ENCODE measurements at regions of chr10 and their contacts with region 1.

Region 1: GRCh38 chr10:102713814-102714620 is at the start of gene ARL3:
- DNase-seq: peak; percentile 75 to 95 (median 89)
- ATAC-seq: peak; percentile 96
- H3K4me3 ChIP-seq: peak within 1 kb of the TSS; percentile 98
- H3K4me3 Mint-ChIP-seq: peak within 1 kb of the TSS; percentile 86 to 98 (median 94)
- H3K27ac ChIP-seq: peak within 1 kb of the TSS; percentile 92
- H3K27ac Mint-ChIP-seq: peak within 1 kb of the TSS; percentile 66 to 95 (median 90)
- H3K4me1 ChIP-seq: peaks cover 4 to 18% of the 10 kb centered on the region in 2 donors
- H3K4me1 Mint-ChIP-seq: peaks cover 26 to 52% (median 43%) of the 10 kb centered on the region in 7 donors
- H3K27me3 ChIP-seq: no peaks in the 10 kb centered on the region
- H3K27me3 Mint-ChIP-seq: no peaks in the 10 kb centered on the region
- total RNA-seq, gene ARL3: 1.3 to 5.1 (median 2.9) TPM

Region 2: DNA sequence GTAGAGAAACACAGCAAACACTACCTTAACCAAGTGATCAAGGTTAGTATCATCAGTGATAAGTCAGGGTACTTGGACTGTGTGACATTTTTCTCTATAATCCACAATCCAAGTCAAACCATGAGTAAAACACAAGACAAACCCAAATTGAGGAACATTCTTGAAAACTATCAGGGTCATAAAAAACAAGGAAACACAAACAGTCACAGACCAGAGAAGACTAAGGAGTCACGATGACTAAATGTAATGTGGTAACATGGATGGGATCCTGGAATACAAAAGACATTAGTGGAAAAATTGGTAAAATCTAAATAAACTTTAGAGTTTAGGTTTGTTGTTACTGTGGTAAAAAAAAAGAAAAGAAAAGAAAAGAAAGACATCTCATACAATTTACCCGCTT is 761.8 kb before region 1 on chr10:
- CTCF ChIA-PET with region 1: no interaction called
- POLR2A ChIA-PET with region 1: no interaction called
- intact Hi-C with region 1: no loop called
- DNase-seq: no peak
- ATAC-seq: no peak
- H3K4me3 ChIP-seq: no peak overlapping the region
- H3K4me3 Mint-ChIP-seq: no peak overlapping the region
- H3K27ac ChIP-seq: no peak overlapping the region
- H3K27ac Mint-ChIP-seq: no peak overlapping the region
- H3K4me1 ChIP-seq: no peaks in the 10 kb centered on the region
- H3K4me1 Mint-ChIP-seq: peaks cover 0 to 8% (median 0%) of the 10 kb centered on the region in 7 donors
- H3K27me3 ChIP-seq: no peaks in the 10 kb centered on the region
- H3K27me3 Mint-ChIP-seq: no peaks in the 10 kb centered on the region

Region 3: DNA sequence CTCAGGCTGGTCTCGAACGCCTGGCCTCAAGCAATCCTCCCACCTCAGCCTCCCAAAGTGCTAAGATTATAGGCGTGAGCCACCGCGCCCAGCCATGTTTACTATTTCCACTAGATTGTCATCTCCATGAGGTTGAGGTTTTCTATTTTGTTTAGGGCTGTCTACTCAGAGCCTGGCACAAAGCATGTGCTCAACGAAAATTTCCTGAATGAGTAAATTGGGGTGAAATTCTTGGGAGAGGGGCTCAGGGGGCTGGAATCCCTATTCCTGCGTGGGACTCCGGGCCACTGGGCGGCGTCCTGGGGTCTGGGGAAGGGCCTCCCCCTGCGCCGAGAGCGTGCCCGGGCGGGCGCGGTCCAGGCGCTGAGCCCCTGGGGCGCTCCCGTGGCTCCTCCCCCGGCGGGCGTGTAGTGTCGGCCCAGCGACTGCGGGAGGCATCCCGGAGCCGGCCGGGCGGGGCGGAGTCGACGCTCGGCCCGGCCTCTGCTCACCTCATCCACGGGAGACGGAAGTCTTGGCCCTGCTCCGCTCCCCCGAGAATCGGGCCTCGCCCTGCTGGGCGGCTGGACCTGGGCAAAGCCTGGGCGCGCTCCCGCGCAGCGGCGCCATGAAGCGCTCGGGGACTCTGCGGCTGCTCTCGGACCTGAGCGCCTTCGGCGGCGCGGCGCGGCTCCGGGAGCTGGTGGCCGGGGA is 649.0 kb before region 1 on chr10 and contains the start of gene HPS6:
- CTCF ChIA-PET with region 1: no interaction called
- POLR2A ChIA-PET with region 1: no interaction called
- intact Hi-C with region 1: loop called in 1 of 2 experiments (anchors 10 kb)
- DNase-seq: peak; percentile 73 to 94 (median 81)
- ATAC-seq: peak; percentile 98
- H3K4me3 ChIP-seq: peak within 1 kb of the TSS; percentile 82
- H3K4me3 Mint-ChIP-seq: peak within 1 kb of the TSS; percentile 79 to 91 (median 89)
- H3K27ac ChIP-seq: peak within 1 kb of the TSS; percentile 93
- H3K27ac Mint-ChIP-seq: peak within 1 kb of the TSS; percentile 85 to 97 (median 93)
- H3K4me1 ChIP-seq: peaks cover 14 to 23% of the 10 kb centered on the region in 2 donors
- H3K4me1 Mint-ChIP-seq: peaks cover 23 to 43% (median 36%) of the 10 kb centered on the region in 7 donors
- H3K27me3 ChIP-seq: no peaks in the 10 kb centered on the region
- H3K27me3 Mint-ChIP-seq: no peaks in the 10 kb centered on the region
- total RNA-seq, gene HPS6: 12.1 to 24.2 (median 20.9) TPM

Region 4: GRCh38 chr10:102660888-102661657 is 52.9 kb before region 1 on chr10:
- CTCF ChIA-PET with region 1: no interaction called
- POLR2A ChIA-PET with region 1: interaction called, 12 read pairs
- intact Hi-C with region 1: no loop called
- DNase-seq: peak in 7 of 9 donors; percentile 24 to 84 (median 44)
- ATAC-seq: peak; percentile 85
- H3K4me3 ChIP-seq: peak overlapping the region; percentile 35
- H3K4me3 Mint-ChIP-seq: peak overlapping the region; percentile 33 to 76 (median 64)
- H3K27ac ChIP-seq: peak overlapping the region; percentile 46
- H3K27ac Mint-ChIP-seq: peak overlapping the region in 7 of 9 donors; percentile 28 to 90 (median 79)
- H3K4me1 ChIP-seq: peaks cover 17 to 34% of the 10 kb centered on the region in 2 donors
- H3K4me1 Mint-ChIP-seq: peaks cover 27 to 48% (median 38%) of the 10 kb centered on the region in 7 donors
- H3K27me3 ChIP-seq: no peaks in the 10 kb centered on the region
- H3K27me3 Mint-ChIP-seq: no peaks in the 10 kb centered on the region

Region 5: GRCh38 chr10:102673819-102674511 is 40.1 kb before region 1 on chr10:
- CTCF ChIA-PET with region 1: interaction called, 11 read pairs
- POLR2A ChIA-PET with region 1: interaction called, 24 read pairs
- intact Hi-C with region 1: loop called (anchors 1 kb)
- DNase-seq: peak; percentile 34 to 91 (median 89)
- ATAC-seq: peak; percentile 91
- H3K4me3 ChIP-seq: peak overlapping the region; percentile 52
- H3K4me3 Mint-ChIP-seq: peak overlapping the region; percentile 78 to 93 (median 85)
- H3K27ac ChIP-seq: peak overlapping the region; percentile 85
- H3K27ac Mint-ChIP-seq: peak overlapping the region; percentile 75 to 97 (median 91)
- H3K4me1 ChIP-seq: peaks cover 18 to 41% of the 10 kb centered on the region in 2 donors
- H3K4me1 Mint-ChIP-seq: peaks cover 36 to 82% (median 58%) of the 10 kb centered on the region in 7 donors
- H3K27me3 ChIP-seq: no peaks in the 10 kb centered on the region
- H3K27me3 Mint-ChIP-seq: no peaks in the 10 kb centered on the region

Region 6: GRCh38 chr10:102743588-102744373 is 29.8 kb after region 1 on chr10 and contains the start of gene WBP1L:
- CTCF ChIA-PET with region 1: interaction called, 3 read pairs
- POLR2A ChIA-PET with region 1: interaction called, 13 read pairs
- intact Hi-C with region 1: loop called (anchors 1 kb)
- DNase-seq: peak; percentile 77 to 98 (median 96)
- ATAC-seq: peak; percentile 98
- H3K4me3 ChIP-seq: peak within 1 kb of the TSS; percentile 85
- H3K4me3 Mint-ChIP-seq: peak within 1 kb of the TSS; percentile 80 to 97 (median 93)
- H3K27ac ChIP-seq: peak within 1 kb of the TSS; percentile 77
- H3K27ac Mint-ChIP-seq: peak within 1 kb of the TSS; percentile 57 to 96 (median 90)
- H3K4me1 ChIP-seq: peaks cover 17 to 25% of the 10 kb centered on the region in 2 donors
- H3K4me1 Mint-ChIP-seq: peaks cover 33 to 59% (median 48%) of the 10 kb centered on the region in 7 donors
- H3K27me3 ChIP-seq: no peaks in the 10 kb centered on the region
- H3K27me3 Mint-ChIP-seq: no peaks in the 10 kb centered on the region
- total RNA-seq, gene WBP1L: 20.5 to 37.9 (median 34.1) TPM

Region 7: DNA sequence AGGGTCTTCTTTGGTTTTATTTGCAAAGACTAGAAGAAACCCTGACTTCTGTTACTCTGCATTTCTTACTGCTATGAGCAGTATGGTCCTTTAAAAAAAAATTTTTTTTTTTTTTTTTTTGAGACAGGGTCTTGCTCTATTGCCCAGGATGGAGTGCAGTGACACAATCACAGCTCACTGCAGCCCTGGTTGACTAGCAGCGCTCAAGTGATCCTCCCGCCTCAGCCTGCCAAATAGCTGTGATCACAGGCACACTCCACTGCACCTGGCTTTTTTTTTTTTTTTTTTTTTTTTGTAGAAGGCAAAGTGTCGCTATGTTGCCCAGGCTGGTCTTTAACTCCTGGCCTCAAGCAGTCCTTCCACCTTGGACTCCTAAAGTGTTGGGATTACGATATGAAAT is 221.5 kb after region 1 on chr10:
- CTCF ChIA-PET with region 1: no interaction called
- POLR2A ChIA-PET with region 1: no interaction called
- intact Hi-C with region 1: no loop called
- DNase-seq: no peak
- ATAC-seq: no peak
- H3K4me3 ChIP-seq: no peak overlapping the region
- H3K4me3 Mint-ChIP-seq: peak overlapping the region in 2 of 10 donors; percentile 8 to 9
- H3K27ac ChIP-seq: no peak overlapping the region
- H3K27ac Mint-ChIP-seq: no peak overlapping the region
- H3K4me1 ChIP-seq: peaks cover 0 to 10% of the 10 kb centered on the region in 2 donors
- H3K4me1 Mint-ChIP-seq: peaks cover 11 to 32% (median 19%) of the 10 kb centered on the region in 7 donors
- H3K27me3 ChIP-seq: no peaks in the 10 kb centered on the region
- H3K27me3 Mint-ChIP-seq: no peaks in the 10 kb centered on the region

Region 8: DNA sequence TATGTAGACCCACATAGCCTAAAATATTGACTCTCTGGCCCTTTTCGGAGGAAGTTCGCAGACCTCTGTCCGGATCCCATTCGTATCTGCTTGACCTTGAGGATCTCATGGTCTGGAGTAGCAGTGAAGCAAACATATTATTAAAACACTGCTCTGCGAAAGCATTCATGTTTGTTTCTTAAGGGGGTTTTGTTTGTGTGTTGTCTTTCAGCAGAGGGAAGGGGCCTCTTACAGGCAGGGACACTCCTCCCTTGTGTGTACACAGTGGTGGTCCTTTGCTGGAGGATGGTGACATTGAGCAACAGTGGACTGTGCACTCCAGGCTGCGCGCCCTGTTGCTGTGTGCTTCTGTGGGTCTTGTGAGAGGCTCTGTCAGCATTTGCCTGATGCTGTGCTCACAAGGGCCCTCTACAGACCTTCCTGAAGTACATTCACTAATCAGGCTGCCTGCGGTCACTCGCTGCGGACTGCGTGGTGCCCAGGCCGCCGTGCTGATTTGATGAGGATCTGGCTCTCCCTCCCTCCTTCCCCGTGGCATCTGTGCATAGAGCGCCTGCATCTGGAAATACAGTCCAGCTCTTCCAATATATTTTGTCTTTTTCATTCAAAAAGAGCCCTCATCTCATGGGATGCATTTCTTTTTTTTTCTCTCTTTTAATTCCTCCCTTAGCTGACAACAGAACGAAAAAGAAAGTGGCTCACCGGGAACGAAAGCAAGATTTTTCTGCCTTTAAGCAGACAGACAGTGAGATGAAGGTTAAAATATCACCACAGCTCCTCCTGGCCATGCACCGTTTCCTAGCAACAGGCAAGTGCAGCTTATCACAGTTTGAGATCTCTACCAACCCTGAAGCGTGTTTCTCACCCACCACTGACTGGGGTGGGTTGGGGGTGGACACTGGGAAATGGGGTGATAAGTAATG is 339.9 kb after region 1 on chr10:
- CTCF ChIA-PET with region 1: no interaction called
- POLR2A ChIA-PET with region 1: no interaction called
- intact Hi-C with region 1: loop called in 1 of 2 experiments (anchors 10 kb)
- DNase-seq: peak in 8 of 9 donors; percentile 42 to 74 (median 58)
- ATAC-seq: peak; percentile 93
- H3K4me3 ChIP-seq: peak overlapping the region; percentile 37
- H3K4me3 Mint-ChIP-seq: peak overlapping the region; percentile 74 to 88 (median 84)
- H3K27ac ChIP-seq: peak overlapping the region; percentile 46
- H3K27ac Mint-ChIP-seq: peak overlapping the region; percentile 85 to 96 (median 90)
- H3K4me1 ChIP-seq: peaks cover 6 to 15% of the 10 kb centered on the region in 2 donors
- H3K4me1 Mint-ChIP-seq: peaks cover 13 to 21% (median 18%) of the 10 kb centered on the region in 7 donors
- H3K27me3 ChIP-seq: no peaks in the 10 kb centered on the region
- H3K27me3 Mint-ChIP-seq: no peaks in the 10 kb centered on the region

Region 9: GRCh38 chr10:103192451-103193106 is 478.6 kb after region 1 on chr10:
- CTCF ChIA-PET with region 1: no interaction called
- POLR2A ChIA-PET with region 1: no interaction called
- intact Hi-C with region 1: loop called in 1 of 2 experiments (anchors 10 kb)
- DNase-seq: peak; percentile 36 to 76 (median 63)
- ATAC-seq: peak; percentile 60
- H3K4me3 ChIP-seq: peak overlapping the region; percentile 85
- H3K4me3 Mint-ChIP-seq: peak overlapping the region; percentile 91 to 100 (median 98)
- H3K27ac ChIP-seq: peak overlapping the region; percentile 97
- H3K27ac Mint-ChIP-seq: peak overlapping the region; percentile 81 to 100 (median 95)
- H3K4me1 ChIP-seq: peaks cover 6 to 21% of the 10 kb centered on the region in 2 donors
- H3K4me1 Mint-ChIP-seq: peaks cover 36 to 48% (median 44%) of the 10 kb centered on the region in 7 donors
- H3K27me3 ChIP-seq: no peaks in the 10 kb centered on the region
- H3K27me3 Mint-ChIP-seq: no peaks in the 10 kb centered on the region

Measured in naive thymus-derived CD4-positive, alpha-beta T cell (primary cell).